Activated B cell treated with CpG ODN at 0.5 μM for 24 hours (primary cell): ENCODE measurements at regions of chr13 and their contacts with region 1.

Region 1: DNA sequence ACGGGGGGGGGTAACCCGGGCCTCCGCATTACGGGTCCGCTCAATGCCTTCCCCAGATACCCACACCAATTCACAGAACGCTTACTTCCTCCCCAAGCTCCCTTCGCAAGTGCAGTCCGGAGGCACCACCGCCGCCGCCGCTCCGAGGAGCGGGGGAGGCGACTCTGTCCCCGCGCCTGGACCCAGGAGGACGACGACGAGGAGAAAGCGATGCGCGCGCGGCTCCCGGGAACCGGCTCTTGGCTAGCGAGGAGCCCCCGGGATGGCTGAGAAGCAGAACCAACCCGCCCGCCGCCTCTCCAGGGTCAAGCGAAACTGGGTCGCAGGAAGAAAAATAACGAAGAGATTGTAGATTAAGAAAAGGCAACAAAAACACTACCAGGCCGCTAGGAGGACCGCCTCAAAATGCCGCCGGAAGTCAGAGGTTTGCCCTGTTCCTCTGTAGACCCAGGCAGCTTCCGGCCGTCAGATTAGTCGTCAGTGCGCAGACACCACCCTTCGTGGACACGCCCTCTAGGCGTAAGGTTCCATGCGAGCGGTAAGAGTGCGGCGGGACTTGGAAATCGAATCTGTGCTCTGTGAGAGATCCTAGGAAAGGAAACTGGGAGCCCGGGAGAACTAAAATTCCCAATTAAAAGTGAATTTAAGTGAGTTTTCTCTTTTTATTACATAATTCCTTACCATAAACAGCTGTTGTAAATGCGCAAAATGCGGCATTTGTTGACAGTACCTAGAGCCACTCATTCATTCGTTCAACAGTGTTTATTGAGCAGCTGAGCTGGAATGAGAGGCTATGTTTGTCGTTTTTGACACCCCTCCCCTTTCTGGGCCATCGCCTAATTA is at the start of gene ZC3H13:
- DNase-seq: peak; percentile 76
- ATAC-seq: peak; percentile 99
- H3K4me3 Mint-ChIP-seq: peak within 1 kb of the TSS; percentile 95
- H3K27ac Mint-ChIP-seq: peak within 1 kb of the TSS; percentile 96
- H3K4me1 Mint-ChIP-seq: peaks cover 39% of the 10 kb centered on the region
- H3K27me3 Mint-ChIP-seq: peaks cover 1% of the 10 kb centered on the region
- CTCF ChIP-seq: no peak
- total RNA-seq, gene ZC3H13: 48.1 and 48.7 TPM in 2 replicates

Region 2: GRCh38 chr13:44988973-44989817 is 1063.3 kb before region 1 on chr13 and contains the starts of genes GPALPP1 and NUFIP1:
- CTCF ChIA-PET with region 1: no interaction called
- POLR2A ChIA-PET with region 1: no interaction called
- intact Hi-C with region 1: loop called (anchors 1 kb)
- DNase-seq: peak; percentile 80
- ATAC-seq: peak; percentile 97
- H3K4me3 Mint-ChIP-seq: peak within 1 kb of the TSS; percentile 99
- H3K27ac Mint-ChIP-seq: peak within 1 kb of the TSS; percentile 98
- H3K4me1 Mint-ChIP-seq: peaks cover 37% of the 10 kb centered on the region
- H3K27me3 Mint-ChIP-seq: no peaks in the 10 kb centered on the region
- CTCF ChIP-seq: no peak
- total RNA-seq, gene GPALPP1: 28.8 and 35.8 TPM in 2 replicates
- total RNA-seq, gene NUFIP1: 6.6 and 7.8 TPM in 2 replicates

Region 3: DNA sequence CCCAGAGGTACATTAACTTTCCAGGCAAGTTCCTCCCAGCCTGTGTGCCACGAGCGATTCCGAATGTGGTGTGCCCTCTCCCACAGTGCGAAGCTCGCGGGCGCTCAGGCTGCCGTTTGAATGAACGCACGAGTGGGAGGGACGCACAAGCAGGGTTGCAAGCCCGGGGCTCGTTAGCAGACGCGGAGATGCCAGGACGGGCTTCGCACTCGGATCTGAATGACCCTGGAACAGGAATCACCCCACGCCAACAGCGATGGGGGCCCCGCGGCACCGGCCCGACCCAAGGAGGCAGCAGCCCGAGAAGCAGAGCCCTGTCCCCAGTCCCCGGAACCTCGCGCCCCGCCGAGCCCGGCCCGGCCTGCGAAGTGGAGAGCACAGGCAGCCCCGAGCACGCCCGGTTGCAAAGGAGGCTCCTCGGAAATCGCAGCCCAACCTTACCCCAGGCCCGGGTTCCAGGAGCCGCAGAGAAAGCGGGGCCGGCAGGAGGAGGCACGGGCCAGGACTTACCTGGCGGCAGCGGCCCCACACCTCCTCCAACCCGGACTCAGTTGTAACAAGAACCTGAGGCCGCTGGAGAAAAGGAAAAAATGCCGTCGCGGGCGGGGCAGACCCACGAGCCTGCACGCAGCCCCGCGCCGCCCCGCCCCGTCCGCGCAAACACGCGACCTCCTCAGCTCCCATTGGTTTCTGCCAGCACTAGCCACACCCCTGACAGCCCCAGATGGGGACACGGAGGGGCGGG is 634.6 kb before region 1 on chr13 and contains the start of gene SLC25A30:
- CTCF ChIA-PET with region 1: no interaction called
- POLR2A ChIA-PET with region 1: no interaction called
- intact Hi-C with region 1: loop called (anchors 5 kb)
- DNase-seq: peak; percentile 87
- ATAC-seq: peak; percentile 96
- H3K4me3 Mint-ChIP-seq: peak within 1 kb of the TSS; percentile 95
- H3K27ac Mint-ChIP-seq: peak within 1 kb of the TSS; percentile 97
- H3K4me1 Mint-ChIP-seq: peaks cover 22% of the 10 kb centered on the region
- H3K27me3 Mint-ChIP-seq: no peaks in the 10 kb centered on the region
- CTCF ChIP-seq: no peak
- total RNA-seq, gene SLC25A30: 19.0 and 19.3 TPM in 2 replicates

Region 4: DNA sequence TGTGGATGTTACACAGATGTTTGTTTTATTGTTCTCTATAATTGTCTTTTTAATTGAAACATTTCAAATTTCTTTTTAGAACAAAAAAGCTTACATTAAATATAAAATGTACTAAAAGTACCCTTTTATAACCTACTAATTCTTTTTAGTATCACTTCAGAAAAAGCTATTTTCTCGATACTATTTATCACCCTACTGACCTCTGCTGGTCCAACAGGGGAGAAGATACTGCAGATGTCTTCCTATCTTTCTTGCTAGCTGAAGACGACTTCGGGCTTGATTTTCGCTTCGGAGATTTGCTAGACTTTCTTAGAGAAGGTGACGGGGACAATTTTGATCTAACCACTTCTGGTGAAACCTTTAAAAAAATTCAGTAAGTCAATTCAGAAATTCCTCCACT is 42.4 kb before region 1 on chr13:
- CTCF ChIA-PET with region 1: no interaction called
- POLR2A ChIA-PET with region 1: no interaction called
- intact Hi-C with region 1: no loop called
- DNase-seq: no peak
- ATAC-seq: no peak
- H3K4me3 Mint-ChIP-seq: no peak overlapping the region
- H3K27ac Mint-ChIP-seq: no peak overlapping the region
- H3K4me1 Mint-ChIP-seq: no peaks in the 10 kb centered on the region
- H3K27me3 Mint-ChIP-seq: no peaks in the 10 kb centered on the region
- CTCF ChIP-seq: no peak

Region 5: GRCh38 chr13:46126552-46127357 is 74.2 kb after region 1 on chr13:
- CTCF ChIA-PET with region 1: interaction called, 3 read pairs
- POLR2A ChIA-PET with region 1: interaction called, 7 read pairs
- intact Hi-C with region 1: loop called (anchors 5 kb)
- DNase-seq: peak; percentile 27
- ATAC-seq: peak; percentile 89
- H3K4me3 Mint-ChIP-seq: no peak overlapping the region
- H3K27ac Mint-ChIP-seq: peak overlapping the region; percentile 9
- H3K4me1 Mint-ChIP-seq: peaks cover 30% of the 10 kb centered on the region
- H3K27me3 Mint-ChIP-seq: no peaks in the 10 kb centered on the region
- CTCF ChIP-seq: no peak

Region 6: DNA sequence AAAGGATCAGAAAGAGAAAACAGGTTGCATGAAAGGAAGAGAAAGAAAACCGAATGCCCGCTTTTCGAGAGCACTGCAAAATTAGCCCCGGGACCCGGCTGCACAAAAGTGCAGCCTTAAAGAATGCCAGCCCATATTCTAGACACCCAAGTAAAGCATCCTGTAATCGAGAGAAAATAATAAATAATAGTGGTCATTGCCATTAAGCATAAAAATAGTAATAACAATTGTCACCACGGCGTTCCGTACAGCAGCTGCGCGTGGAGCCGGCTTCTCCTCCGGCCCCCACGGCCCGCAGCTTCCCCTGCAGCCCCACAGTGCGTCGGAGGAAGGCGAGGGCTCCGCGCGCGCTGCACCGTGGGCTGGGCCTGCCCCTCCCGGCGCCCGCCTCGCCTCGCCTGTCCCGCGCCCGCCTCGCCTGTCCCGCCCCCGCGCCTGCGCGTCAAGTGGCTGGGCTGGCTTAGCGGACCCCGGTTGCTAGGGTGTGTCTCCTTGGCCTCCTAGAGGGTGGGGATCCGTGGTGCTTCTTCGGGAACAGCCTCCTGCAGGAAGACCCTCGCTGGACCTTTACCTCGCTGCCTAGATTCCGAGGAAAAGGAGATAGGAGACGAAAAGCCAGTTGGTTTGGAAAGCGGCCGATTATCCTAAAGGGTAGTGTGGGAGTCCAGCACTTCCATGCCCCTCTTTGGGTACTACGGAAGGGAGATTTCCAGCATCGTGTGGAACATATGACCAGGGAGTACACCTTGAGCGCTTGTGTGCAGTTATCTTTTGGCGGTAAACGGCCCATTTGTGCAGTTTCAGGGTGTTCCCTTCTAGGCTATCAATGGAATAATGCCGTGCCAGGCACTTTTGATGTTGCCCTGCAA is 159.2 kb after region 1 on chr13 and contains the start of gene LRRC63:
- CTCF ChIA-PET with region 1: no interaction called
- POLR2A ChIA-PET with region 1: no interaction called
- intact Hi-C with region 1: loop called (anchors 5 kb)
- DNase-seq: peak; percentile 73
- ATAC-seq: peak; percentile 99
- H3K4me3 Mint-ChIP-seq: peak within 1 kb of the TSS; percentile 78
- H3K27ac Mint-ChIP-seq: peak within 1 kb of the TSS; percentile 21
- H3K4me1 Mint-ChIP-seq: peaks cover 22% of the 10 kb centered on the region
- H3K27me3 Mint-ChIP-seq: no peaks in the 10 kb centered on the region
- CTCF ChIP-seq: no peak
- total RNA-seq, gene LRRC63: 0.10 TPM in 1 of 2 replicates, not detected in the other

Region 7: DNA sequence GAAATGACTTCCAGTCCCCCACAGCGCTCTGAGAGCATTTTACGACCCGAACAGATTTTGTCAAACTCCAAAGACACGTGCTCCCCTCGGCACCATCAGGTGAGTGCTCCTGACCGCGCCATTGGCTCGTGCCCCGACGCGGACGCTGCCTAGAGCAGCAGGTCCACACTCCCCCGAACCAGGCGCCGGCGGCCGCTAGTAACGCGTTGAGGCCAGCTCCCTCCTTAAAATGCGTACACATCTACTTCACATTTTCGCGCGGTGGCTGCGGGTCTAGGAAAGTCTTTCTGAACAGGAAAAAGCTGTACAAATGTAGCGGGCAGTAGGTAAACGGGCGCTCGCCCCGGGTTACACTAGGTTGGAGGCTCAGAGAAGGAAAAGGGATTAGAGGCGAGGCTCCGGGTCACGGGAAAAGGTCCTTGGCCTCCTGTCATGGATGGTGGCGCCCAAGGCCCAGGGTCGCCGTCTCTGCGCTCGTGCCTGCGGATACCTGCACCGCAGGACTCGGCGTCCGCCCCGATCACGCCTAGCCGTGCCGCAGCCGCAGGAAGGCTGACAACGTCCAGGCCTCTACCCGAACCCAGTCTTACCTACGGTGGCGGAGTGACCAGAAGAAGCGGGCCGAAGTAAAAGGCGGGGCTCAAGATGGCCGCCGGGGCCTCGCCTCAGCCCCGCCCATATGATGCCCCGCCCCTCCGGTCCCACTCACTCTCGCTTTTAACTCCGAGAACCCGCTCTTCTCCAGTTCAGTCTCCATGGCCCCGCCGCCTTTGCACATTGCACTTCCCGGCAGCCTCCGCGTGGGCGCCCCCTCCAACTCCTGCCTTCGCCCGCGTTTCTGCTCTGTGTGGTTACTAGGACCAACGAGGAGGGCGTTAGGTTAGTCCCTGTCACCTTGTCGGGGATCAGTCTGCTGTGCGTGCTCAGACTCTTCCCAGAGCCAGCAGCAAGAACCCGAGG is 744.3 kb after region 1 on chr13 and contains the start of gene ESD:
- CTCF ChIA-PET with region 1: no interaction called
- POLR2A ChIA-PET with region 1: no interaction called
- intact Hi-C with region 1: loop called (anchors 2 kb)
- DNase-seq: peak; percentile 86
- ATAC-seq: peak; percentile 95
- H3K4me3 Mint-ChIP-seq: peak within 1 kb of the TSS; percentile 97
- H3K27ac Mint-ChIP-seq: peak within 1 kb of the TSS; percentile 96
- H3K4me1 Mint-ChIP-seq: peaks cover 38% of the 10 kb centered on the region
- H3K27me3 Mint-ChIP-seq: no peaks in the 10 kb centered on the region
- CTCF ChIP-seq: no peak
- total RNA-seq, gene ESD: 73.5 and 74.2 TPM in 2 replicates